ENCODE measurements at regions of chr11 and their contacts with region 1.

Region 1: DNA sequence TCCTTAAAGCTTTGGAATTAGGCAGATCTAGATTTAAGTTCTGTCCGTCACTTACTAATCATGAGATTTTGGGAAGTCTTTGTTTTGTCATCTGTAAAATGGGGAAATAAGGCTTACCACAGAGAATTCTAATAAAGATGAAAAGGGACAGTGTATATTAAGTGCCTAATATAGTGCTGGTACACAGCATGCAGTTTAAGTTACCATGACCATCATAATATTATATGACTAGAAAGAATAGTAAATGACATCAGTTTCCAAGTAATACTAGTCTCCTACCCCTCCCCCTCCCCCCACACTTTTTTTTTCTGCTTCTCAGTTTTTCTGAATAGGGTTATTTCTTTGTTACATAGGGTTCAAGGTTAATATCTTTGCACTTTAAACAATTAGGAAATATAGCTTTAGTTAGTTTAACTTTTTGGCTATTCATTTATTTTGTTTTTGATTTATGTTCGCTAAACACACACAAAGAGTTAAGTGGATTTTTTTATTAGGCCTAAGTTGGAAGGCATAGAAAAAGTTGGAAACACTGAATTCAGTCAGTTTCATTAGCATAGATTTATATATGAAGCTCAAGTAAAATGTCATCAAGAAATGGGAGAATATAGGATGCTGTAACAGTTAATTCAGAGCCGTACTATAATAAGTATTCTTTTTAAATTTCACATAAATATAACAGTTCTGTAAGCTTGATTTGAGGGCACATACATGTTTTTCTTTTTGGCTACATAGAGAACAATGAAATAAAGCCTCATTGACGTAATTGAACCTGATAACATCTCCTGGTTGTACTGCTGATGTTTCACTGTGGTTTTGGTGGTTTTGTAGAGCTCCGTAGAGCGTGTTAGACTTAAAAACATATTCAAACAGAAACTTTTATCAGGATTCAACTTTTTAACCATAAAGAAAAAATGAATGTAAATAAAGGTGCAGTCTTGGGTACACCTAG is 121.2 kb downstream of the PDE3B start:
- DNase-seq: peak in 7 of 9 donors; percentile 82 to 95 (median 92)
- ATAC-seq: peak; percentile 95
- H3K4me3 ChIP-seq: peak overlapping the region; percentile 30
- H3K4me3 Mint-ChIP-seq: peak overlapping the region in 5 of 10 donors; percentile 54 to 78 (median 62)
- H3K27ac ChIP-seq: peak overlapping the region; percentile 72
- H3K27ac Mint-ChIP-seq: no peak overlapping the region
- H3K4me1 ChIP-seq: peaks cover 36 to 61% of the 10 kb centered on the region in 2 donors
- H3K4me1 Mint-ChIP-seq: peaks cover 15 to 54% (median 34%) of the 10 kb centered on the region in 7 donors
- H3K27me3 ChIP-seq: no peaks in the 10 kb centered on the region
- H3K27me3 Mint-ChIP-seq: no peaks in the 10 kb centered on the region

Region 2: DNA sequence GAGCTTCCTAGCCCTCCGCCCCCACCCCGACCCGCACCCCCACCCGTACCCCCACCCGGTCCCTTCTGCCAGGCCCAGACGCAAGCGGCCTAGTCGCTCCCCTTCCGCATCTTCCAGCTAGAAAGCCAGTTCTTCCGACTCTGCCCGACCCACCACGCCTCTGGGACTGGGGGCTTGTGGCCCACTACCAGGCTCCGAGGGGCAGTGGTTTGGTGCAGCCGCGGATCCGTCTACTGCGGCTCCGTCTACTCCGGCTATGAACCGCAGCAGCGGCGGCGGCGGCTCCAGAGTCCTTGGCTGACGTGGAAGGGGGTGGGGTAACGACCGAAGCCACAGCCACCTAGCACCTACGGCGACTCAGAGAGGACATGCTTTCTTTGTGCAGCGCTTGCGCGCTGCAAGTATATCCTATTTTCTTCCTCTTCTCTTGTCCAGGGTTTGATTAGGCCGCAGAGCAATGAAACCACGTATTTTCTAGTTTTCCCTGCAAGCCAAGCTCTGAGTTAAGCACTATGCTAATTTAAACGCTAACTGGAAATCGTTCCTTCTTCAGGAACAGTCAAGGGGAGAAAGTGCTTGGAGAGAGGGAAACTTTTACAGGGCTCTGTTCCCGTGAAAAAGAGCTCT is 265.2 kb before region 1 on chr11 and contains the start of gene COPB1:
- CTCF ChIA-PET with region 1: no interaction called
- POLR2A ChIA-PET with region 1: interaction called, 7 read pairs
- intact Hi-C with region 1: loop called (anchors 1 to 2 kb)
- DNase-seq: peak; percentile 82 to 94 (median 92)
- ATAC-seq: peak; percentile 99
- H3K4me3 ChIP-seq: peak within 1 kb of the TSS; percentile 70
- H3K4me3 Mint-ChIP-seq: peak within 1 kb of the TSS; percentile 79 to 98 (median 92)
- H3K27ac ChIP-seq: peak within 1 kb of the TSS; percentile 91
- H3K27ac Mint-ChIP-seq: peak within 1 kb of the TSS; percentile 87 to 98 (median 94)
- H3K4me1 ChIP-seq: peaks cover 0 to 21% of the 10 kb centered on the region in 2 donors
- H3K4me1 Mint-ChIP-seq: peaks cover 27 to 54% (median 47%) of the 10 kb centered on the region in 7 donors
- H3K27me3 ChIP-seq: no peaks in the 10 kb centered on the region
- H3K27me3 Mint-ChIP-seq: no peaks in the 10 kb centered on the region
- total RNA-seq, gene COPB1: 73.4 to 102 (median 75.9) TPM

Region 3: GRCh38 chr11:14544611-14545010 is 220.2 kb before region 1 on chr11:
- CTCF ChIA-PET with region 1: no interaction called
- POLR2A ChIA-PET with region 1: no interaction called
- intact Hi-C with region 1: loop called in 1 of 2 experiments (anchors 2 kb)
- DNase-seq: no peak
- ATAC-seq: peak; percentile 54
- H3K4me3 ChIP-seq: no peak overlapping the region
- H3K4me3 Mint-ChIP-seq: peak overlapping the region in 1 of 10 donors; percentile 71
- H3K27ac ChIP-seq: no peak overlapping the region
- H3K27ac Mint-ChIP-seq: peak overlapping the region in 2 of 9 donors; percentile 26 to 84
- H3K4me1 ChIP-seq: peaks cover 0 to 9% of the 10 kb centered on the region in 2 donors
- H3K4me1 Mint-ChIP-seq: peaks cover 13 to 63% (median 32%) of the 10 kb centered on the region in 7 donors
- H3K27me3 ChIP-seq: no peaks in the 10 kb centered on the region
- H3K27me3 Mint-ChIP-seq: no peaks in the 10 kb centered on the region

Region 4: GRCh38 chr11:14713496-14714244 is 51.2 kb before region 1 on chr11:
- CTCF ChIA-PET with region 1: interaction called, 3 read pairs
- POLR2A ChIA-PET with region 1: interaction called, 3 read pairs
- intact Hi-C with region 1: loop called in 1 of 2 experiments (anchors 5 kb)
- DNase-seq: peak in 7 of 9 donors; percentile 56 to 82 (median 74)
- ATAC-seq: peak; percentile 91
- H3K4me3 ChIP-seq: peak overlapping the region; percentile 22
- H3K4me3 Mint-ChIP-seq: peak overlapping the region; percentile 60 to 85 (median 70)
- H3K27ac ChIP-seq: peak overlapping the region; percentile 1
- H3K27ac Mint-ChIP-seq: peak overlapping the region; percentile 10 to 95 (median 83)
- H3K4me1 ChIP-seq: peaks cover 16 to 20% of the 10 kb centered on the region in 2 donors
- H3K4me1 Mint-ChIP-seq: peaks cover 19 to 60% (median 48%) of the 10 kb centered on the region in 7 donors
- H3K27me3 ChIP-seq: no peaks in the 10 kb centered on the region
- H3K27me3 Mint-ChIP-seq: no peaks in the 10 kb centered on the region

Region 5: GRCh38 chr11:14751975-14752407 is 12.9 kb before region 1 on chr11:
- CTCF ChIA-PET with region 1: interaction called, 3 read pairs
- POLR2A ChIA-PET with region 1: interaction called, 3 read pairs
- intact Hi-C with region 1: loop called (anchors 1 kb)
- DNase-seq: no peak
- ATAC-seq: peak; percentile 56
- H3K4me3 ChIP-seq: no peak overlapping the region
- H3K4me3 Mint-ChIP-seq: peak overlapping the region in 9 of 10 donors; percentile 11 to 76 (median 58)
- H3K27ac ChIP-seq: peak overlapping the region; percentile 52
- H3K27ac Mint-ChIP-seq: peak overlapping the region; percentile 24 to 90 (median 67)
- H3K4me1 ChIP-seq: peaks cover 0 to 33% of the 10 kb centered on the region in 2 donors
- H3K4me1 Mint-ChIP-seq: peaks cover 26 to 82% (median 66%) of the 10 kb centered on the region in 7 donors
- H3K27me3 ChIP-seq: no peaks in the 10 kb centered on the region
- H3K27me3 Mint-ChIP-seq: no peaks in the 10 kb centered on the region

Region 6: DNA sequence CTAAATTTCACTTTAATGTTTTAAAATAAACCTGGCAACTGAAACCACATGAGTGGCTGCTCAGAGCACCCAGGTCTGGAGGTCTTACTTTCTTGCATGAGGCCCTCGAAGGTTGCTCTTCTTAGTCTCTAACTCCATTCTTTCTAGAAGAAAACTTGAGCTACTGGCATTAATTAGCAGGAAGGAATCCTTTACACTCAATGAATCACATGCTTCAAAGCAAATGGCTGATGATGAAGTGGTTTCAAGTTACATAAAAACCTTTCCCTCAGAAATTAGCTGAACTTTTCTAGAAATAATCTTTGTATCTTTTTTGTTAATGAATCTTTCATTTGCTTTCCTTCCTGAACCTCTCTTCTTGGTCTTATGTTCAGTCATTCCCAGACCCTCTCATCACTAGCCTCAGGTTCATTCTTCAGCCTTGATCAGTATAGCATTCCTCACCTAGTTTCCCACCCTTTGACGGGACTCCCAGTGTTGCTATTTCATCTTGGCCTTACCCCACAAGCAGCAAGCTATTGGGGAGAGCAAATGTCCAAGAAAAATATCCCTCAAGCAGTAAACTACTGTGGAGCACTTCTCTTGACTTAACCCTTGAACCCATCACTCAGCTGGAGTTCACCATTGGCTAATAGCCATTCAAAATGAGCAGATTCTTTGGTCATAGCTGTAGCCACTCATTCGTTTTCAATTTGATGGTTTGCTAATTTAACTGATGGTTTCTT is 424.9 kb after region 1 on chr11:
- CTCF ChIA-PET with region 1: no interaction called
- POLR2A ChIA-PET with region 1: no interaction called
- intact Hi-C with region 1: no loop called
- DNase-seq: no peak
- ATAC-seq: no peak
- H3K4me3 ChIP-seq: no peak overlapping the region
- H3K4me3 Mint-ChIP-seq: no peak overlapping the region
- H3K27ac ChIP-seq: no peak overlapping the region
- H3K27ac Mint-ChIP-seq: no peak overlapping the region
- H3K4me1 ChIP-seq: no peaks in the 10 kb centered on the region
- H3K4me1 Mint-ChIP-seq: no peaks in the 10 kb centered on the region
- H3K27me3 ChIP-seq: no peaks in the 10 kb centered on the region
- H3K27me3 Mint-ChIP-seq: peaks cover 0 to 19% (median 7%) of the 10 kb centered on the region in 5 donors